ENCODE measurements at regions of chr7 and their contacts with region 1.

Region 1: GRCh38 chr7:150351548-150352194 is 10.2 kb upstream of the RARRES2 start:
- DNase-seq: no peak
- H3K4me3 ChIP-seq: no peak overlapping the region
- H3K27ac ChIP-seq: peak overlapping the region; percentile 22
- H3K4me1 ChIP-seq: no peaks in the 10 kb centered on the region
- H3K27me3 ChIP-seq: no peaks in the 10 kb centered on the region
- CTCF ChIP-seq: no peak
- POLR2A ChIP-seq: no peak

Region 2: GRCh38 chr7:149104749-149105148 is 1246.9 kb before region 1 on chr7:
- intact Hi-C with region 1: no loop called
- DNase-seq: no peak
- H3K4me3 ChIP-seq: no peak overlapping the region
- H3K27ac ChIP-seq: no peak overlapping the region
- H3K4me1 ChIP-seq: no peaks in the 10 kb centered on the region
- H3K27me3 ChIP-seq: no peaks in the 10 kb centered on the region
- CTCF ChIP-seq: no peak
- POLR2A ChIP-seq: no peak

Region 3: GRCh38 chr7:150368096-150368883 is 16.6 kb after region 1 on chr7 and contains the start of gene REPIN1:
- intact Hi-C with region 1: no loop called
- DNase-seq: no peak
- H3K4me3 ChIP-seq: peak within 1 kb of the TSS; percentile 83 to 86
- H3K27ac ChIP-seq: peak within 1 kb of the TSS; percentile 94
- H3K4me1 ChIP-seq: peaks cover 46% of the 10 kb centered on the region
- H3K27me3 ChIP-seq: no peaks in the 10 kb centered on the region
- CTCF ChIP-seq: no peak
- POLR2A ChIP-seq: peak in 1 of 2 donors; percentile 56
- total RNA-seq, gene REPIN1: 49.4 TPM

Region 4: GRCh38 chr7:150845421-150845861 is 493.8 kb after region 1 on chr7:
- intact Hi-C with region 1: loop called (anchors 5 kb)
- DNase-seq: peak; percentile 44 to 70
- H3K4me3 ChIP-seq: no peak overlapping the region
- H3K27ac ChIP-seq: no peak overlapping the region
- H3K4me1 ChIP-seq: peaks cover 9% of the 10 kb centered on the region
- H3K27me3 ChIP-seq: no peaks in the 10 kb centered on the region
- CTCF ChIP-seq: no peak
- POLR2A ChIP-seq: no peak